ENCODE measurements at regions of chrX and their contacts with region 1.

Region 1: GRCh38 chrX:47030339-47030738 is 47.9 kb upstream of the RGN start:
- DNase-seq: no peak
- H3K4me3 Mint-ChIP-seq: no peak overlapping the region
- H3K27ac Mint-ChIP-seq: no peak overlapping the region
- H3K4me1 Mint-ChIP-seq: no peaks in the 10 kb centered on the region
- H3K27me3 Mint-ChIP-seq: no peaks in the 10 kb centered on the region

Region 2: DNA sequence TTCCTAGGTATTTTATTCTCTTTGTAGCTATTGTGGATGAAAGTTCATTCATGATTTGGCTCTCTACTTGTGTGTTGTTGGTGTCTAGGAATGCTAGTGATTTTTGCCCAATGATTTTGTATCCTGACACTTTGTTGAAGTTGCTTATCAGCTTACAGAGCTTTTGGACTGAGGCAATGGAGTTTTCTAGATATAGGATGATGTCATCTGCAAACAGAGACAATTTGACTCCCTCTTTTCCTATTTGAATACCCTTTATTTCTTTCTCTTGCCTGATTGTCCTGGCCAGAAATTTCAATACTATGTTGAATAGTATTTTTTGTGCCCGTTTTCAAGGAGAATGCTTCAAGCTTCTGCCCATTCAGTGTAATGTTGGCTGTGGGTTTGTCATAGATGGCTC is 928.0 kb before region 1 on chrX:
- CTCF ChIA-PET with region 1: no interaction called
- POLR2A ChIA-PET with region 1: no interaction called
- intact Hi-C with region 1: no loop called
- DNase-seq: no peak
- H3K4me3 Mint-ChIP-seq: no peak overlapping the region
- H3K27ac Mint-ChIP-seq: no peak overlapping the region
- H3K4me1 Mint-ChIP-seq: no peaks in the 10 kb centered on the region
- H3K27me3 Mint-ChIP-seq: no peaks in the 10 kb centered on the region

Region 3: GRCh38 chrX:47078129-47079043 is 48.0 kb after region 1 on chrX and contains the start of gene RGN:
- CTCF ChIA-PET with region 1: no interaction called
- POLR2A ChIA-PET with region 1: no interaction called
- intact Hi-C with region 1: no loop called
- DNase-seq: no peak
- H3K4me3 Mint-ChIP-seq: no peak within 1 kb of the TSS
- H3K27ac Mint-ChIP-seq: no peak within 1 kb of the TSS
- H3K4me1 Mint-ChIP-seq: no peaks in the 10 kb centered on the region
- H3K27me3 Mint-ChIP-seq: no peaks in the 10 kb centered on the region
- total RNA-seq, gene RGN: not detected

Region 4: DNA sequence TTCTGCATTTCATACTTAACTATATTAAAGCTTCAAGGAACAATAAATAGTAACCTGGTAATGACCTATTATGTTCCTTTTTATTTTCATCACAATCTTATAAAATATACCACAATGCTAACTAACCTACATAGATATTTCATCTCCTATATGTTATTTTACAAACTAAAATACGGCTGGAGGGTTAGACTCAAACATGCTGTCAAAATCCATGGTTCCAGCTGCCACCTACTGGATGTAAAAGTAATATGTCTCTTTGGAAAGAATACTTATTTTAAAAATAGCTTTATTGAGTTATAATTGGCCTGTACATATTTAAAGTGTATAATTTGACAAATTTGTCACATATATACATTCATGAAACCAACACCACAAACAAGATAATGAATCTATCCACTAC is 62.9 kb after region 1 on chrX:
- CTCF ChIA-PET with region 1: interaction called, 4 read pairs
- POLR2A ChIA-PET with region 1: no interaction called
- intact Hi-C with region 1: loop called (anchors 5 kb)
- DNase-seq: no peak
- H3K4me3 Mint-ChIP-seq: no peak overlapping the region
- H3K27ac Mint-ChIP-seq: no peak overlapping the region
- H3K4me1 Mint-ChIP-seq: peaks cover 8% of the 10 kb centered on the region
- H3K27me3 Mint-ChIP-seq: no peaks in the 10 kb centered on the region

Region 5: GRCh38 chrX:47410649-47411048 is 380.3 kb after region 1 on chrX:
- CTCF ChIA-PET with region 1: no interaction called
- POLR2A ChIA-PET with region 1: no interaction called
- intact Hi-C with region 1: no loop called
- DNase-seq: no peak
- H3K4me3 Mint-ChIP-seq: no peak overlapping the region
- H3K27ac Mint-ChIP-seq: no peak overlapping the region
- H3K4me1 Mint-ChIP-seq: no peaks in the 10 kb centered on the region
- H3K27me3 Mint-ChIP-seq: no peaks in the 10 kb centered on the region